ENCODE measurements at regions of chr7 and their contacts with region 1.

Region 1: DNA sequence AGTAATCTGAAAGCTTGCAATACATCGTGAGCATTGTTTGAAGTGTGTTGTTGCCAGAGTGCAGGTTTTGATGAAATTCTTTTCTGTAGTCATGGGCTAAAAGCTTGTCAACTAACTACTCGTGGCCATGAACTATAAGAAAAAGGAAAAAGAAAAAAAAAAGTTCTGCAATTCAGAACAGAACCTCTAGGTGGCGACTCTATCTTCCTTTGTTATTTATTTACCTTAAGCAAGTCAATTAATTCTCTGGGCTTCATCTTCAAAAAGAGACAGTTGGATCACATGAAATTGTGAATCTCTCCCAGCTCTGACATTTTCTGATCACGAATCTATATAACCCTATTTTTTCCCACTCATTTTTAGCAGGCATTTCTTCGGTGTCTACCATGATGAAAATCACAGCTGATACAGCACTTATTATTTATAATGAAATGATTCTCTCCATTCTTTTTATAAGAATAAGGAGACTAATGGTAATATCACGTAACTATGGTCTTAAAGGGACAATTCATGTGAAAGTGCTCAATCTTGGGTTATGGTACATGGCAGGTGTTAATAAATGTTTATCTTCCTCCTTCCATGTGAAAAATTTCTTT is 18.8 kb downstream of the TMEM196 start:
- DNase-seq: no peak
- H3K4me3 Mint-ChIP-seq: no peak overlapping the region
- H3K27ac Mint-ChIP-seq: no peak overlapping the region
- H3K4me1 Mint-ChIP-seq: no peaks in the 10 kb centered on the region
- H3K27me3 Mint-ChIP-seq: peaks cover 8% of the 10 kb centered on the region

Region 2: GRCh38 chr7:19772841-19773760 is 18.5 kb after region 1 on chr7 and contains the start of gene TMEM196:
- CTCF ChIA-PET with region 1: interaction called, 10 read pairs
- intact Hi-C with region 1: no loop called
- DNase-seq: peak; percentile 4
- H3K4me3 Mint-ChIP-seq: no peak within 1 kb of the TSS
- H3K27ac Mint-ChIP-seq: no peak within 1 kb of the TSS
- H3K4me1 Mint-ChIP-seq: peaks cover 13% of the 10 kb centered on the region
- H3K27me3 Mint-ChIP-seq: peaks cover 40% of the 10 kb centered on the region
- total RNA-seq, gene TMEM196: not detected

Region 3: DNA sequence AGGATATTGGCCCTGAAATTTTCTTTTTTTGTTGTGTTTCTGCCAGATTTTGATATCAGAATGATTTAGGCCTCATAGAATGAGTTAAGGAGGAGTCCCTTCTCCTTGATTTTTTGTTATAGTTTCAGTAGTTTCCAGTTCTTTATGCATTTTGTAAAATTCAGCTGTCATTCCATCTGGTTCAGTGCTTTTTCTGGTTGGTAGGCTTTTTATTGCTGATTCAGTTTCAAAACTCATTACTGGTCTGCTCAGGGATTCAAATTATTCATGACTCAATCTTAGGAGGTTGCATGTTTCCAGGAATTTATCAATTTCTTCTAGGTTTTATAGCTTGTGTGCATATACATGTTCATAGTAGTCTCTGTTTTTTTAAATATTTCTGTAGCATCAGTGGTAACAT is 28.9 kb after region 1 on chr7:
- CTCF ChIA-PET with region 1: no interaction called
- intact Hi-C with region 1: no loop called
- DNase-seq: no peak
- H3K4me3 Mint-ChIP-seq: no peak overlapping the region
- H3K27ac Mint-ChIP-seq: no peak overlapping the region
- H3K4me1 Mint-ChIP-seq: no peaks in the 10 kb centered on the region
- H3K27me3 Mint-ChIP-seq: peaks cover 9% of the 10 kb centered on the region

Region 4: DNA sequence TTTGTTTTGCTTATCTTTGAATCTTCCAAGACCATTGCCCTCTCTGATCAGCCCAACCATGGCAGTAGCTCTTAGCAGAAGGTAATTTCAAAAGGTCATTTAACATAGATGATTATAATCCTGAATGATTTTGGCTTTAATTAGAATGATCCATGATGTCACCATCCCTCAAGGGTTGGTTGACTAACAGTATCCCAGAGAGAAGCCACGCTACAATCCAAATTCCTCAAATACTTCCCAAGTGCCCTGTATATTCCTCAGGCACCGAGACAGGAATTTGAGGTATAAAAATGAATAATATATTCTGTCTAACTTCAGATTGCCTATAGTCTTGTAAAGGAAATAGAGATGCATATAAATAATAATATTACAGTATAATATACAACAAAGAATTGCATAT is 60.9 kb after region 1 on chr7:
- CTCF ChIA-PET with region 1: no interaction called
- intact Hi-C with region 1: no loop called
- DNase-seq: no peak
- H3K4me3 Mint-ChIP-seq: no peak overlapping the region
- H3K27ac Mint-ChIP-seq: no peak overlapping the region
- H3K4me1 Mint-ChIP-seq: no peaks in the 10 kb centered on the region
- H3K27me3 Mint-ChIP-seq: no peaks in the 10 kb centered on the region

Region 5: GRCh38 chr7:20114468-20114867 is 359.8 kb after region 1 on chr7:
- CTCF ChIA-PET with region 1: no interaction called
- intact Hi-C with region 1: loop called (anchors 5 kb)
- DNase-seq: peak; percentile 8
- H3K4me3 Mint-ChIP-seq: no peak overlapping the region
- H3K27ac Mint-ChIP-seq: no peak overlapping the region
- H3K4me1 Mint-ChIP-seq: peaks cover 11% of the 10 kb centered on the region
- H3K27me3 Mint-ChIP-seq: no peaks in the 10 kb centered on the region

Region 6: GRCh38 chr7:20172736-20173334 is 418.2 kb after region 1 on chr7:
- CTCF ChIA-PET with region 1: no interaction called
- intact Hi-C with region 1: loop called (anchors 1 kb)
- DNase-seq: peak; percentile 39
- H3K4me3 Mint-ChIP-seq: no peak overlapping the region
- H3K27ac Mint-ChIP-seq: no peak overlapping the region
- H3K4me1 Mint-ChIP-seq: no peaks in the 10 kb centered on the region
- H3K27me3 Mint-ChIP-seq: no peaks in the 10 kb centered on the region

Region 7: DNA sequence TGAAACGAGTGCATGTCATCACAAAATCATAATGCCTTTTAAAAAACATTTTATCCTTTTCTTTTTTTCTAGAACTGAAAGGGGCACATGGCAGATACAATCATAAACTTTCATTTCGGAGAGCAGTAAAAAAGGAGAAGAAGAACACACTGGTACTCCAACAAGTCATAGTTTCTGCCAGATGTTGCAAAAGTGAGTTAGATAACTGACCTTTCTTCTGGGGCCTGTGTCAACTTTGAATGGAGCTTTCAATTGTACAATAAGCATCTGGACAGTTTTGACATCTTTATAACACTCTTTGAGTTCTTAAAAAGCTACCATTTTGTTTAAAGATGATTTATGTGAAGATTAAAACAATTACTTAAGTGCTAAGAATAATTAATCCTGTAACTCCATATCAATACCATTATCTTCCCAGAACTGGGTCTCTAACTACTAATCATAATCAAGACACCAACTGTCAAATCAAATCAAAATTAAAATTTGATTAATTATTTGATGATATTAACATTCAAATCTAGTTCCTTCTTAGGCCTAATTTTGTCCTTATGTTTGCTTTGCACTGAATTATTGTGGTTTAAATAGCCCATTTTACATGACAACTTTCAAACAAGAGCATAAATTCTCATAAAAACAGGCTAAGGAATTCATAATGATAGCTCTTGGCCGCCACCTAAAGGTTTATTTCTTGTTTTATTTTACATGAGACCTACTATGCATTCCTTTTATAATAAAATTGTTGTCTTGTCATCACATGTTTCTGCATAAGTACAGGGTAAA is 556.5 kb after region 1 on chr7:
- CTCF ChIA-PET with region 1: no interaction called
- intact Hi-C with region 1: loop called (anchors 1 kb)
- DNase-seq: no peak
- H3K4me3 Mint-ChIP-seq: no peak overlapping the region
- H3K27ac Mint-ChIP-seq: no peak overlapping the region
- H3K4me1 Mint-ChIP-seq: no peaks in the 10 kb centered on the region
- H3K27me3 Mint-ChIP-seq: no peaks in the 10 kb centered on the region